ENCODE measurements at regions of chr19 and their contacts with region 1.

Region 1: DNA sequence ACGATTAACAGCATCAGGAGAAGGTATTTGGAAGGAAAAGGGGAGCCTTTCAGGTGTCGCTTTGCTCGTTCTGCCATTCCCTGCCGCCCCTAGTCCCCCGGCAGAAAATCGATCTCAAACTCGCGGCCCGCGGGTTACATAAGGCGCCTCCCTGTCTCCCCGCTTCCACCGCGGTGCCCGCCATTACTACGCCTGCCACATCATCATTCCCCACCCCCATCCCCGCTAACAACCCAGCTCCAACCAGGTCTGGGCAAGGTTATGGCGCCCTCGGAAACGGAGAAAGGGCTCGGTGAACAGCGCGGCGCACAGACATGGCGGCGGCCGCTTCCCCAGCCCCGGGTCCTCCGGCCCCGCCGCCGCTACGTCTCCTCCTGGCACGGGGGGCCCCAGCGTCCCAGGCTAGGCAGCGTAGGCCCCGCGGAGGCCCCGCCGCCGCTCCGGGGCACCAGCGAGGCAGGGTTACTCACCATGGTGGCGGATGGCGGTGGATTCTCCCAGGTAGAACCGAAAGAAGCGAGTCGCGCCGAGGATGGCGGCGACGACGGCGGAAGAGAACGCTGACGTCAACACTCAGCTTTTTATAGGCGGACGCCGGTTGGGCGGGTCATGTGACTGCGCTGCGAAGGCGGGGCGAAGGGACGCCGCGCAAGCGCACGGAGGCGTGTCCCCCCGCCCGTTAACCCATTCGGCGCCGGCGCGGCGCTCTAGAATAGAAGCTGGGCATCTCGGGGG is at the start of gene EEF2:
- DNase-seq: peak; percentile 91 to 98 (median 92)
- ATAC-seq: peak; percentile 56
- H3K4me3 ChIP-seq: peak within 1 kb of the TSS; percentile 99
- H3K27ac ChIP-seq: peak within 1 kb of the TSS; percentile 99
- H3K4me1 ChIP-seq: peaks cover 25 to 58% of the 10 kb centered on the region in 2 experiments; a peak in 4 of 5 replicates
- H3K27me3 ChIP-seq: no peaks in the 10 kb centered on the region
- CTCF ChIP-seq: no peak
- EP300 ChIP-seq: no peak
- POLR2A ChIP-seq: peak; percentile 100
- RAD21 ChIP-seq: no peak
- polyA plus RNA-seq, gene EEF2: 372 to 422 TPM

Region 2: DNA sequence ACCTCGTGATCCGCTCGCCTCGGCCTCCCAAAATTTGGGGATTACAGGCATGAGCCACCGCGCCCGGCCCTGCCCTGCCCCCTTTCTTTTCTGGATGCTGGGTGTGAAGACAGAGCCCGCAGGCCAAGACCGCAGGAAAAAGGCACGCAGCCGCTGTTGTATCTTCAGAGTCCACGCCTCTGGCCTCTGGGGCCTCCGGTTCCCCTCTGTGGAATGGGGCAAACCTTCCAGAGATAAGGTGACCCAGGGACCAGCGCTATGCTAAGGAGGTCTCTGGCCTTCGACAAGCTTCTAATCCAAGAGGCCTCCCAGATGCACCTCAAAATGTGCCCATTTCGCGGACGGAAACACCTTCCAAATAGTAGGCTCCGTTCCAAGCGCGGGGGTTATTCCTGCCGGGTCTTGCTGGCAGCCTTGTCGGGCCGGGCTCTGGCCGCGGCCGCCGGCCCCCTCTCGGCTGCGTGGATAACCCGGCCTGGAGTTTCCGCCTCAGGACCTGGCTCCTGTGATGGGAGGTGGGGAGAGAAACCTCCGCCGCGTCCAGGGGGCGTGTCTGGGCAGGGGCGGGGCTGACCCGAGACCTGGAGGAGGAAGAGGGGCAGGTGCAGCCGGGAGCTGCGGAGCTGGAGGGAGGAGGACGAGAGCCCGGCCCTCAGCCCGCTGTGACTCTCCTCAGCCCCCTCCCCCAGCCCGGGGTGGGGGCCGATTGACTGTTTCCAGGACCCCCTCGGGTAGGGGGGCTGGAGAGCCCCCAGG is 263.8 kb before region 1 on chr19:
- CTCF ChIA-PET with region 1: no interaction called
- POLR2A ChIA-PET with region 1: no interaction called
- in situ Hi-C with region 1: no loop called
- intact Hi-C with region 1: no loop called
- DNase-seq: peak; percentile 96 to 98 (median 98)
- ATAC-seq: peak; percentile 85
- H3K4me3 ChIP-seq: 0 out of 2 replicates have a peak overlapping the region, but pooled peaks have one; percentile 10
- H3K27ac ChIP-seq: no peak overlapping the region
- H3K4me1 ChIP-seq: peaks cover 7 to 31% of the 10 kb centered on the region in 2 experiments; a peak in 3 of 5 replicates
- H3K27me3 ChIP-seq: no peaks in the 10 kb centered on the region
- CTCF ChIP-seq: peak in 1 of 3 experiments; percentile 11; a peak in 1 of 6 replicates
- EP300 ChIP-seq: peak; percentile 65
- POLR2A ChIP-seq: no peak
- RAD21 ChIP-seq: no peak

Region 3: GRCh38 chr19:3907626-3908265 is 77.3 kb before region 1 on chr19:
- CTCF ChIA-PET with region 1: no interaction called
- POLR2A ChIA-PET with region 1: no interaction called
- in situ Hi-C with region 1: no loop called
- intact Hi-C with region 1: no loop called
- DNase-seq: peak in 2 of 4 experiments; percentile 31 to 32
- ATAC-seq: peak; percentile 87
- H3K4me3 ChIP-seq: no peak overlapping the region
- H3K27ac ChIP-seq: no peak overlapping the region
- H3K4me1 ChIP-seq: peaks cover 0 to 14% of the 10 kb centered on the region in 2 experiments; a peak in 2 of 5 replicates
- H3K27me3 ChIP-seq: peaks cover 19 to 35% of the 10 kb centered on the region in 2 experiments; a peak in 4 of 5 replicates
- CTCF ChIP-seq: peak; percentile 19 to 32 (median 25); a peak in 3 of 6 replicates
- EP300 ChIP-seq: no peak
- POLR2A ChIP-seq: no peak
- RAD21 ChIP-seq: peak in 1 of 2 experiments; percentile 4; a peak in 1 of 4 replicates

Region 4: GRCh38 chr19:3970808-3971598 is 14.1 kb before region 1 on chr19 and contains the start of gene DAPK3:
- CTCF ChIA-PET with region 1: interaction called, 3 read pairs
- POLR2A ChIA-PET with region 1: interaction called, 215 read pairs
- in situ Hi-C with region 1: no loop called
- intact Hi-C with region 1: no loop called
- DNase-seq: peak; percentile 94 to 98 (median 96)
- ATAC-seq: peak; percentile 91
- H3K4me3 ChIP-seq: peak within 1 kb of the TSS; percentile 94
- H3K27ac ChIP-seq: peak within 1 kb of the TSS; percentile 76
- H3K4me1 ChIP-seq: peaks cover 15 to 29% of the 10 kb centered on the region in 2 experiments
- H3K27me3 ChIP-seq: no peaks in the 10 kb centered on the region
- CTCF ChIP-seq: 0 out of 6 replicates have a peak, but pooled peaks of 1 of the 3 experiments have one; percentile 3
- EP300 ChIP-seq: no peak
- POLR2A ChIP-seq: peak; percentile 57
- RAD21 ChIP-seq: no peak
- polyA plus RNA-seq, gene DAPK3: 0.14 to 0.21 TPM

Region 5: GRCh38 chr19:4007021-4007835 is 22.2 kb after region 1 on chr19 and contains the start of gene PIAS4:
- CTCF ChIA-PET with region 1: no interaction called
- POLR2A ChIA-PET with region 1: interaction called, 12 read pairs
- in situ Hi-C with region 1: no loop called
- intact Hi-C with region 1: no loop called
- DNase-seq: peak; percentile 98 to 100 (median 100)
- ATAC-seq: peak; percentile 96
- H3K4me3 ChIP-seq: peak within 1 kb of the TSS; percentile 90
- H3K27ac ChIP-seq: peak within 1 kb of the TSS; percentile 84
- H3K4me1 ChIP-seq: peaks cover 22 to 56% of the 10 kb centered on the region in 2 experiments; a peak in 4 of 5 replicates
- H3K27me3 ChIP-seq: no peaks in the 10 kb centered on the region
- CTCF ChIP-seq: no peak
- EP300 ChIP-seq: no peak
- POLR2A ChIP-seq: peak; percentile 72
- RAD21 ChIP-seq: no peak
- polyA plus RNA-seq, gene PIAS4: 0.27 TPM

Region 6: GRCh38 chr19:4182084-4182810 is 197.2 kb after region 1 on chr19 and contains the starts of genes ANKRD24 and SIRT6:
- CTCF ChIA-PET with region 1: interaction called, 4 read pairs
- POLR2A ChIA-PET with region 1: interaction called, 4 read pairs
- in situ Hi-C with region 1: no loop called
- intact Hi-C with region 1: loop called (anchors 5 kb)
- DNase-seq: peak; percentile 98 to 99 (median 99)
- ATAC-seq: peak; percentile 83
- H3K4me3 ChIP-seq: peak within 1 kb of the TSS; percentile 84
- H3K27ac ChIP-seq: peak within 1 kb of the TSS; percentile 73
- H3K4me1 ChIP-seq: peaks cover 17 to 49% of the 10 kb centered on the region in 2 experiments
- H3K27me3 ChIP-seq: no peaks in the 10 kb centered on the region
- CTCF ChIP-seq: no peak
- EP300 ChIP-seq: peak; percentile 68
- POLR2A ChIP-seq: peak; percentile 79
- RAD21 ChIP-seq: no peak
- polyA plus RNA-seq, gene ANKRD24: not detected
- polyA plus RNA-seq, gene SIRT6: 1.4 to 1.8 TPM

Region 7: DNA sequence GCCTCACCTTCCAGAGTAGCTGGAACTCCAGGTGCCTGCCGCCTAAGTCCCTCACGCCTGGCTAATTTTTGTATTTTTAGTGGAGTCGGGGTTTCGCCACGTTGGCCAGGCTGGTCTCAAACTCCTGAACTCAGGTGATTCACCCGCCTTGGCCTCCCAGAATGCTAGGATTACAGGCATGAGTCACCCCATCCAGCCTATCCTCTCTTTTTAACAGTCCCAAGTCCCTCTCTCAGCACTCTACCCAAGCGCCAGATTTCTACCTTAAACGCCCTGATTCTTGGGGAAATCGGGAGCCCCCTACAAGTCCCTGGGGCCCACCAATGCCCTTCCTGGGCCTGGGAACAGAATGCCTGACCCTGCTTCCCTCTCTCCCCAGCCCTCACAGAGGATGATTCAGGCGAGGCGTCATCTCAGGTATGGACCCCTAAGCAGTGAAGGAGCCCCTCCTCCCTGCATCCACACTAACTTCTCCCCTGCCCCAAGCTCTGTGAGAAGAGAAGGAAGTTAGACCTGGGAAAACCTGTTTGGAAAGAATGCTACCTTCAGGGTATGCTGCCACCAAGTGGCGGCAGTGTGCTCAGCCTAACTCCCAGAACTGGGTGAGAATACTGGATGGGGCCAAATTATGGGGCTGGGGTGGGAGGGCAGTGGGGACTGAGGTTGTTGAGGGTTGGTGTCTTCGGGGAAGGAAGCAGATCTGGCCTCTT is 223.5 kb after region 1 on chr19:
- CTCF ChIA-PET with region 1: interaction called, 31 read pairs
- POLR2A ChIA-PET with region 1: interaction called, 7 read pairs
- in situ Hi-C with region 1: loop called (anchors 5 kb)
- intact Hi-C with region 1: loop called (anchors 1 kb)
- DNase-seq: peak in 3 of 4 experiments; percentile 55 to 59 (median 58)
- ATAC-seq: no peak
- H3K4me3 ChIP-seq: no peak overlapping the region
- H3K27ac ChIP-seq: no peak overlapping the region
- H3K4me1 ChIP-seq: peaks cover 5 to 28% of the 10 kb centered on the region in 2 experiments; a peak in 4 of 5 replicates
- H3K27me3 ChIP-seq: peaks cover 7 to 20% of the 10 kb centered on the region in 2 experiments; a peak in 3 of 5 replicates
- CTCF ChIP-seq: peak; percentile 20 to 35 (median 29); a peak in 2 of 6 replicates
- EP300 ChIP-seq: no peak
- POLR2A ChIP-seq: no peak
- RAD21 ChIP-seq: 0 out of 4 replicates have a peak, but pooled peaks of 1 of the 2 experiments have one; percentile 6

Measured in K562 (cell line).